A549 (cell line): ENCODE measurements at regions of chr14 and their contacts with region 1.

Region 1: GRCh38 chr14:94129111-94129757 is at the start of gene IFI27L2:
- DNase-seq: peak; percentile 79 to 90
- ATAC-seq: peak; percentile 95 to 96
- H3K4me3 ChIP-seq: peak within 1 kb of the TSS; percentile 49
- H3K27ac ChIP-seq: peak within 1 kb of the TSS; percentile 66 to 81
- H3K4me1 ChIP-seq: peaks cover 4% of the 10 kb centered on the region; the same call in 2 of the 3 replicates
- CTCF ChIP-seq: no peak
- EP300 ChIP-seq: no peak
- POLR2A ChIP-seq: peak; percentile 42
- RAD21 ChIP-seq: no peak
- polyA plus RNA-seq, gene IFI27L2: 20.3 and 26.9 TPM in 2 replicates

Region 2: DNA sequence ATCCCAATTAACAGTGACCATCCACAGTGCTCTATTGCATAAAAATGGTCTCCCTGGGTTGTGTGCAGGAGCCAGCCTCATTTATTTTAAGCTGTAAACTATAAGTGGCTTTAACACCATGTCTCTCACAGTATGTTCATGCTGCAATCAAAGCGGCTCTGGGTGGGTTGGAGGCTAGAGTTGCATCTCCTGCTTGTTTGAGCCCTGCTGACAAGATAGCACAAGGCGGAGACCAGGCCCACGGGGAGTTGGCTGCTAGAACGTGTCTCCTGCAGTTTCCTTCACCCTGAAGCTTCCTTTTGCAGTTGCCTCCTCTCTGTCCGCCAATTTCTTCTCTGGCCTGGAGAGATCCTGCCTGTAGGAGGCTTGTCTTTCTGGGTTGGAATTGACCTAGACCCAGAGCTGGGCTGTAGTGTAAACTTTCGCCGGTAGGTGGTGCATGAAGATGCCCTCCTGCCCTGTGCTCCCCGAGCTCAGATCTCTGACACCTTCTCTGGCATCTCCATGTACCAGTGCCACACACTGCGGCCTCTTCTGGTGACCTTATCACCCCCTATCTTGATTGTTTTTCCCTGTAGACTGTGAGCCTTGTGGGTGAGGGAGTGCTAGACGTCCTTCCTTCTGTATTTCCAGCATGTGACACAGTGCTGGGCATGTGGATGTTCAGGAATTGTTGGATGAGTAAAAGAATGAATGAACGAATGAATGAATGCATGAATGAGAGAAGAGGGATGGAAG is 92.8 kb before region 1 on chr14:
- CTCF ChIA-PET with region 1: interaction called, 12 read pairs
- POLR2A ChIA-PET with region 1: no interaction called
- DNase-seq: peak; percentile 71 to 76
- ATAC-seq: peak; percentile 87 to 97
- H3K4me3 ChIP-seq: no peak overlapping the region
- H3K27ac ChIP-seq: no peak overlapping the region
- H3K4me1 ChIP-seq: no peaks in the 10 kb centered on the region
- CTCF ChIP-seq: peak; percentile 62
- EP300 ChIP-seq: no peak
- POLR2A ChIP-seq: no peak
- RAD21 ChIP-seq: peak; percentile 54 to 58; a peak in 4 of 5 replicates

Region 3: GRCh38 chr14:94143239-94143638 is 14.0 kb after region 1 on chr14:
- CTCF ChIA-PET with region 1: interaction called, 19 read pairs
- POLR2A ChIA-PET with region 1: no interaction called
- DNase-seq: no peak
- ATAC-seq: peak; percentile 43 to 74; a peak in 4 of 6 replicates
- H3K4me3 ChIP-seq: no peak overlapping the region
- H3K27ac ChIP-seq: no peak overlapping the region
- H3K4me1 ChIP-seq: no peaks in the 10 kb centered on the region
- CTCF ChIP-seq: no peak
- EP300 ChIP-seq: no peak
- POLR2A ChIP-seq: no peak
- RAD21 ChIP-seq: peak in 1 of 2 experiments; percentile 21; a peak in 1 of 5 replicates

Region 4: DNA sequence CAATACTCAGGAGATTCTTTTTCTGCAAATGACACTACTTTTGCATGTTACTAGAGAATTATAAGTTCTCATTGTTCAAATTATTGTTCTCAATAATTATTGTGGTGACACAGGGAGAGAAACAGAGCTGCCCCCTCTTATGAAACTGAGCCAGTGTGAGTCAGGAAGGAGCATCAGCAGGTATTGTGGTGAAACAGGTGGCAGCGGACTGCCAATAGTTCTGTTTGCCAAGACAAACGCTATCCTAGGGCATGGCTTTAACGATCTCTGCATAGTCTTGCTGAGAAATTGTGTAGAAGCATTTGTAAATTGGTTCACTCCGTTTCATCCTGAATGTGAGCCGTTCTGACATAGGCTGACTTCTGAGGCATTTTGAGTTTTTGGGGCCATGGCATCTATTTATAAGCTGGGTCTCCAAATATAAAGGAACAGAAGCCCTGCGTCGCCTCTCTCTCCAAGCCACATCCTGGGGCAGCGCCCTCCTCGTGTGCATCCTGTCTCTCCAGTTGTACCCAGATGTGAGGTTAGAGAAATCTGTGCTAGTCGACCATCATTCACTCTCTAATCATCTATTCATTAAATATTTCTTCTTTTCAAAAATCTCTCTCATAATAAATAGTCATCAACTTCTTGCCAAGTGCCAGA is 29.1 kb after region 1 on chr14:
- CTCF ChIA-PET with region 1: no interaction called
- POLR2A ChIA-PET with region 1: no interaction called
- DNase-seq: no peak
- ATAC-seq: no peak
- H3K4me3 ChIP-seq: no peak overlapping the region
- H3K27ac ChIP-seq: no peak overlapping the region
- H3K4me1 ChIP-seq: no peaks in the 10 kb centered on the region
- CTCF ChIP-seq: no peak
- EP300 ChIP-seq: no peak
- POLR2A ChIP-seq: no peak
- RAD21 ChIP-seq: no peak

Region 5: DNA sequence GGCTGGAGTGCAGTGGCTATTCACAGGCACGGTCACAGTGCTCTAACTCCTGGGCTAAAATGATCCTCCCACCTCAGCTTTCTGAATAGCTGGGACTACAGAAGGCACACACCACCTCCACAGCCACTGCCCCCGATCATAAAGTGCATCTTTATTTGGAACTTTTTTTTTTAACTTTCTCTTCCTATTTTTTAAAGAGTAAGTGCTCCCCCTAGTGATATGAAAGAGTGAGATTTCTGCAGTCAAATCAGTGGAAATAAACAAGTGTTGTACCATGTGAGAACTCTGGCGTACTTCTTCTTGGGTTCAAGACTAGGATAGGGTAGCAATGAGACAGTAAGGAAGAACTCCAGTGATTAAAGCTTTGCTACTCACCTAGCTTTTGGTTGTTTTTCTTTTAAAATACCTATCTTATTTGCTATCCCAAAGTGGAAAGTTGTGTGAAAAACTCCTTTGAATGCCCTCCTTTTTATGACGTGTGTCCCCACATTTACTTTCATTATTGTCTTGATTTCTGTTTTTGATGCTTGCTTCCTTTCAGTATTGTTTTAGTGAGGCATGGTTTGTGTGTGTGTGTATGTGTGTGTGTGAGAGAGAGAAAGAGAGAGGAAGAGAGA is 51.5 kb after region 1 on chr14:
- CTCF ChIA-PET with region 1: interaction called, 14 read pairs
- POLR2A ChIA-PET with region 1: no interaction called
- DNase-seq: peak; percentile 18 to 48
- ATAC-seq: peak; percentile 62 to 75; a peak in 4 of 6 replicates
- H3K4me3 ChIP-seq: no peak overlapping the region
- H3K27ac ChIP-seq: no peak overlapping the region
- H3K4me1 ChIP-seq: no peaks in the 10 kb centered on the region
- CTCF ChIP-seq: peak; percentile 73
- EP300 ChIP-seq: no peak
- POLR2A ChIP-seq: no peak
- RAD21 ChIP-seq: peak; percentile 63 to 70